ENCODE measurements at regions of chr10 and their contacts with region 1.

Region 1: DNA sequence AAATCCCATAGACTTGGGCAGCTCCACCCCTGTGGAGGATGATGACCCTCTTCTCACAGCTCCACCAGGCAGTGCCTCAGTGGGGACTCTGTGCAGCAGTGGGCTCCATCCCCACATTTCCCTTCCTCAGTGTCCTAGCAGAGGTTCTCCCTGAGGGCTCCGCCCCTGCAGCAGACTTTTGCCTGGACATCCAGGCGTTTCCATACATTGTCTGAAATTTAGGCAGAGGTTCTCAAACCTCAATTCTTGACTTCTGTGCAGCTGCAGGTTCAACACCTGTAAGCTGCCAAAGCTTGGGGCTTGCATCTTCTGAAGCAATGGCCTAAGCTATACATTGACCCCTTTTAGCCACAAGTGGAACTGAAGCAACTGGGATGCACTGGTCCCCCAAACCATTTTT is 31.8 kb downstream of the NEUROG3 start:
- DNase-seq: no peak
- ATAC-seq: no peak
- H3K4me3 Mint-ChIP-seq: no peak overlapping the region
- H3K27ac Mint-ChIP-seq: no peak overlapping the region
- H3K4me1 Mint-ChIP-seq: no peaks in the 10 kb centered on the region
- H3K27me3 Mint-ChIP-seq: peaks cover 5% of the 10 kb centered on the region

Region 2: GRCh38 chr10:69632516-69633199 is 91.2 kb after region 1 on chr10:
- CTCF ChIA-PET with region 1: no interaction called
- POLR2A ChIA-PET with region 1: no interaction called
- intact Hi-C with region 1: no loop called
- DNase-seq: no peak
- ATAC-seq: no peak
- H3K4me3 Mint-ChIP-seq: no peak overlapping the region
- H3K27ac Mint-ChIP-seq: no peak overlapping the region
- H3K4me1 Mint-ChIP-seq: peaks cover 13% of the 10 kb centered on the region
- H3K27me3 Mint-ChIP-seq: no peaks in the 10 kb centered on the region

Region 3: DNA sequence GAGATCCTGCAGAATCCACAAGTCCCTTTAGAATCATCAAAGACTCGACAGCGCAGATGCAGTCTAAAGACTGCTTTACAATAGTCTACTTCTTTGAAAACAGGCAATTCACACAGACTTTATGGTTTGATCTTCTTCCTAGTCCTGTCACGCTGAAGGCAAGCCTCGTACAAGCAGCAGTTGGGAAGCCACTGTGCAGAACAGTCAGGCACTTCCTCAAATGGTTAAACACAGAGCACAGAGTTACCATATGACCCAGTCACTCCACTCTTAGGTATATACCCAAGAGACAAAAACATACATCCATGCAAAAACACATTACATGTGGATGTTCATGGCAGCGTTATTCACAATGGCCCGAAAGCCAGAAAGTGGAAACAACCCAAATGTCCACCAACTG is 799.6 kb after region 1 on chr10:
- CTCF ChIA-PET with region 1: no interaction called
- POLR2A ChIA-PET with region 1: no interaction called
- intact Hi-C with region 1: loop called in 1 of 2 experiments (anchors 5 kb)
- DNase-seq: no peak
- ATAC-seq: no peak
- H3K4me3 Mint-ChIP-seq: no peak overlapping the region
- H3K27ac Mint-ChIP-seq: no peak overlapping the region
- H3K4me1 Mint-ChIP-seq: no peaks in the 10 kb centered on the region
- H3K27me3 Mint-ChIP-seq: no peaks in the 10 kb centered on the region